ENCODE measurements at regions of chr3 and their contacts with region 1.

Region 1: DNA sequence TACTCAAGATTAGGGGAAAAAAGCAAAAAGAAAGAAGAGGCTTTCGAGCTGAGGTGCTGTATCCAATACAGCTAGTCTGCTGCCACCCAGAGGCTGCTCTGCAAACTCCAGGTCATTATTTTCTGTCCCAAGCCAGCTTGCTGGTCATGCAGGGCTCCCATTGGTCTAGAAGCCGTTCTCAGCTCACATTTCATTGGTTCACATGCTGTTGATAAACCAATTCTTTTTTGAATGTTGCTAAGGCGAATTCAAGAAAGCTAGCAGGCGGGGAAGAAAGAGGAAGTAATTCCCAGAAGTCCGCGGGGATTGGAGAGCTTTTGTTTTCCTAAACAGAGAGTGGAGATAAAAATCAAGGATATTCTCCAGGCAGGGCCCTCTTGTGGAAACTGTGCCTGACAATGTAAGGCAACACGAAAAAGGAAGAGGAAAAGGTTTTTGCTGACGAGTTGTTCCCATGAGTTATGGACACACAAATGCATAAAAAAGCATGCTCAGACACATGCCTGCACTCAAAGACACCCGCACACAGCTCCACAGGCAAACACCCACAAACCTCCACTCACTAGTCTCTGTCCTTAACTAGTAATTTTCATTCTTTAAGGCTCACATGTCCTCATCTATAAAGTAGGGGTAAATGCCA is 33.4 kb downstream of the FSTL1 start:
- DNase-seq: peak; percentile 93

Region 2: DNA sequence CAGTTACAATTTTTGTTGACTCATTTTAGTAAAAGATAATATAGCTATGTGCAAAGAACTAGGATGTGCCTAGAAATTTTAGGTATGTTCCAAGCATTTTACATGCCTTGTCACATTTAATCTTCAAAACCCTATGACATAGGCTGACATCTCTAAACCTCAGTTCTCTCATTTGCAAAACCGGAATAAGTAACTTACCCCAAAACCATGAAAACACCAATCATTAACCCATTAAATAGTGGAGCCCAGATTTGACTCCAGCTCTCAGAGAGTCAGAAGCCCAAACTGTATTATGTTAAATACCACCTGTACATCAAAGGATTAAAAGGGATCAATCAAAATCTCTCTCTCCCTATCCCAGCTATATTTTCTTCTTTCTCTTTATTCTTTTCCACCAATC is 359.8 kb before region 1 on chr3:
- CTCF ChIA-PET with region 1: no interaction called
- POLR2A ChIA-PET with region 1: no interaction called
- DNase-seq: no peak

Region 3: GRCh38 chr3:120245386-120245785 is 172.0 kb before region 1 on chr3:
- CTCF ChIA-PET with region 1: interaction called, 37 read pairs
- POLR2A ChIA-PET with region 1: no interaction called
- DNase-seq: no peak

Region 4: GRCh38 chr3:120348981-120349818 is 68.2 kb before region 1 on chr3 and contains the start of gene LRRC58:
- CTCF ChIA-PET with region 1: no interaction called
- POLR2A ChIA-PET with region 1: interaction called, 23 read pairs
- DNase-seq: peak; percentile 89

Region 5: GRCh38 chr3:120438665-120439370 is 21.4 kb after region 1 on chr3:
- CTCF ChIA-PET with region 1: interaction called, 10 read pairs
- POLR2A ChIA-PET with region 1: no interaction called
- DNase-seq: no peak

Region 6: DNA sequence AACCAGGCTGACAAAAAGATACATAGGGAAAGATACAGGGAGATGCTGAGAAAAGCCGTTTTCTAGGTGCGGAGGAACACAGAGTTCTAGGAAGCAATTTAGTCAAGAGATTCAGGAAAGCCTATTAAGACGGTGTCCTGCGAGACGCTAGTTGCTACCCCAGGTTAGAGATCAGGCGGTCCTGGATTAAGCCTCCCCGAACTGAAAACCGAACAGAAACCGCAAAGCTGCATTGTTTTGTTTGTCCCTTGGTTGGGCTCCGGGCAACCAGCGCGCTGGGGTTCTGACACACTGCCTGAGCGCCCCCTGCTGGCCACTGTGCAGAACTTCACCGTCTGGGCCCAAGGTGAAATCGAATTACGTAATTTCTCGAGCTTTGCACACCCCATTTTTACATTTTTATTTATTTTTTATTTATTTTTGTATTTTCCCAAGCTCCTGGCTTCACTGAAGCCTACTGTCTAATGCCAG is 141.4 kb after region 1 on chr3:
- CTCF ChIA-PET with region 1: interaction called, 58 read pairs
- POLR2A ChIA-PET with region 1: interaction called, 10 read pairs
- DNase-seq: peak; percentile 80

Region 7: GRCh38 chr3:120567370-120568201 is 150.2 kb after region 1 on chr3:
- CTCF ChIA-PET with region 1: interaction called, 17 read pairs
- POLR2A ChIA-PET with region 1: interaction called, 3 read pairs
- DNase-seq: peak; percentile 49